Naive thymus-derived CD4-positive, alpha-beta T cell (primary cell): ENCODE measurements at regions of chr3 and their contacts with region 1.

Region 1: DNA sequence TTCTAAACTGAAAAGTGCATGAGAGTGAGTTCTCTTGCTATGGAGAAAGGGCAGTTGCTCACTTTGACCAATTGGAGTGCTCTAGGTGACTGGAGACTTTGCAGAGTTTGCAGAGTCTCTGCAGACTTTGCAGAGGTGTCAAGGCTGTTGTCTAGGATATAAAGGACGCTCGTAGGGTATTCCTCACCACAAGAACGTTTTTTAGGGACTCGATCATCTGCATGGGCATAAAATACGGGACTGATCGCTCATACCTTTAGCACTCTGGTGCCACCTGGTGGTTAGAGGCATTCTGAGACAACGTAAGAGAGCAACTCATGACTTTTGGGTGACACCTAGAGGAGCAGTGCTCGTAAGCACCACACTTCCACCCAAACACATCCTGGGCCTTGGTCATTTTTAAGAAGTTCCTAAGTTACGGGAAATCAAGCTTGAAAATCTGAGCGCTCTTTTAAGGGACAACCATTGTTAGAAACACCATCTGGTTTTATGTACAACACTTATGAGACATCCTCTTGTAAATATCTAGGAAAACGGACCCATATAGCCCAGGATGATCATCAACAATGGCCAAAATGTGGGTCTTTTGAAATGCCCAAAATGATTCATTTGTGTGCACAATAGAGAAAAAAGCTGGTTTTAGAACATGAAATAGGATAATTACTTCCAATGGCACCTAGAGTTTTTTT is 51.6 kb upstream of the XCR1 start:
- DNase-seq: peak; percentile 66 to 89 (median 85)
- ATAC-seq: peak; percentile 100
- H3K4me3 ChIP-seq: no peak overlapping the region
- H3K4me3 Mint-ChIP-seq: peak overlapping the region in 5 of 10 donors; percentile 10 to 63 (median 32)
- H3K27ac ChIP-seq: no peak overlapping the region
- H3K27ac Mint-ChIP-seq: peak overlapping the region in 2 of 9 donors; percentile 3 to 33
- H3K4me1 ChIP-seq: peaks cover 0 to 6% of the 10 kb centered on the region in 2 donors
- H3K4me1 Mint-ChIP-seq: peaks cover 0 to 44% (median 5%) of the 10 kb centered on the region in 7 donors
- H3K27me3 ChIP-seq: no peaks in the 10 kb centered on the region
- H3K27me3 Mint-ChIP-seq: peaks cover 0 to 34% (median 0%) of the 10 kb centered on the region in 5 donors

Region 2: DNA sequence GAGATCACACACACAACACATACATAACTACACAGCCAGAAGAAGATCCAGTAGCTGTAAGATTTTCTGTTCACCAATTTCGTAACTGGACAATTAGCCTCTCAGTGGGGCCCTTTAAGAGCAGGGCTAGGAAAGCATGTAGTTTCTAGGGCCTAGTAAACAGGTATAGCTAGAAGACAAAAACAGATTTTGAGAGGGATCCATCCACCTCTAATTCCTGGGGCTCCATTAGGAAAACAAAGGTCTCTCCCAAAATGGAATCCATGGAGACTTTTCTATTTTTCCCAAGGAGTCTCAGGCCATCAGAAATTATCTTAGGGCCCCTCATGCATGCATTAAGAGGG is 1306.8 kb before region 1 on chr3:
- CTCF ChIA-PET with region 1: no interaction called
- POLR2A ChIA-PET with region 1: no interaction called
- intact Hi-C with region 1: no loop called
- DNase-seq: no peak
- ATAC-seq: no peak
- H3K4me3 ChIP-seq: no peak overlapping the region
- H3K4me3 Mint-ChIP-seq: no peak overlapping the region
- H3K27ac ChIP-seq: no peak overlapping the region
- H3K27ac Mint-ChIP-seq: no peak overlapping the region
- H3K4me1 ChIP-seq: no peaks in the 10 kb centered on the region
- H3K4me1 Mint-ChIP-seq: peaks cover 0 to 3% (median 0%) of the 10 kb centered on the region in 7 donors
- H3K27me3 ChIP-seq: no peaks in the 10 kb centered on the region
- H3K27me3 Mint-ChIP-seq: peaks cover 0 to 3% (median 2%) of the 10 kb centered on the region in 5 donors

Region 3: GRCh38 chr3:45593708-45594609 is 484.9 kb before region 1 on chr3:
- CTCF ChIA-PET with region 1: no interaction called
- POLR2A ChIA-PET with region 1: no interaction called
- intact Hi-C with region 1: loop called in 1 of 2 experiments (anchors 10 kb)
- DNase-seq: peak; percentile 46 to 83 (median 70)
- ATAC-seq: peak; percentile 83
- H3K4me3 ChIP-seq: peak overlapping the region; percentile 71
- H3K4me3 Mint-ChIP-seq: peak overlapping the region; percentile 84 to 99 (median 90)
- H3K27ac ChIP-seq: peak overlapping the region; percentile 72
- H3K27ac Mint-ChIP-seq: peak overlapping the region; percentile 85 to 96 (median 91)
- H3K4me1 ChIP-seq: peaks cover 44 to 58% of the 10 kb centered on the region in 2 donors
- H3K4me1 Mint-ChIP-seq: peaks cover 48 to 61% (median 55%) of the 10 kb centered on the region in 7 donors
- H3K27me3 ChIP-seq: no peaks in the 10 kb centered on the region
- H3K27me3 Mint-ChIP-seq: peaks cover 0 to 3% (median 0%) of the 10 kb centered on the region in 5 donors

Region 4: DNA sequence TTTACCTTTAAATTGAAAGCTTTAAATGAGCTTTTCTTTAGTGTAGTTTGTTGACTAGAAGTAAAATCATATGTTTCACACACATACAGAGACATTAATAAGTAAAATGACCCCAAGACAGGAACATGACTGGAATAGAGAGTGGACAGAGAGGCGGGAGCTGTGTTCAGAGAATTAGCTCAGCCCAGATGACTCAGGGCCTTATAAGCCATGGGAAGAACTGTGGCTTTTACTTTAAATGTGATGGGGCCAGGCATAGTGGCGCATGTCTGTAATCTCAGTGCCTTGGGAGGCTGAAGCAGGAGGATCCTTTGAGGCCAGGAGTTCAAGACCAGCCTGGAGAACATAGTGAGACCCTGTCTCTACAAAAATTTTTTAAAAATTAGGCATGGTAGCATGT is 362.9 kb before region 1 on chr3:
- CTCF ChIA-PET with region 1: no interaction called
- POLR2A ChIA-PET with region 1: no interaction called
- intact Hi-C with region 1: no loop called
- DNase-seq: no peak
- ATAC-seq: no peak
- H3K4me3 ChIP-seq: no peak overlapping the region
- H3K4me3 Mint-ChIP-seq: no peak overlapping the region
- H3K27ac ChIP-seq: no peak overlapping the region
- H3K27ac Mint-ChIP-seq: peak overlapping the region in 3 of 9 donors; percentile 31 to 66 (median 62)
- H3K4me1 ChIP-seq: no peaks in the 10 kb centered on the region
- H3K4me1 Mint-ChIP-seq: peaks cover 10 to 32% (median 21%) of the 10 kb centered on the region in 7 donors
- H3K27me3 ChIP-seq: no peaks in the 10 kb centered on the region
- H3K27me3 Mint-ChIP-seq: no peaks in the 10 kb centered on the region

Region 5: GRCh38 chr3:45760878-45761711 is 317.8 kb before region 1 on chr3:
- CTCF ChIA-PET with region 1: interaction called, 9 read pairs
- POLR2A ChIA-PET with region 1: no interaction called
- intact Hi-C with region 1: loop called (anchors 1 kb)
- DNase-seq: peak in 7 of 9 donors; percentile 10 to 46 (median 33)
- ATAC-seq: peak; percentile 71
- H3K4me3 ChIP-seq: no peak overlapping the region
- H3K4me3 Mint-ChIP-seq: peak overlapping the region in 1 of 10 donors; percentile 16
- H3K27ac ChIP-seq: no peak overlapping the region
- H3K27ac Mint-ChIP-seq: no peak overlapping the region
- H3K4me1 ChIP-seq: no peaks in the 10 kb centered on the region
- H3K4me1 Mint-ChIP-seq: peaks cover 0 to 6% (median 3%) of the 10 kb centered on the region in 7 donors
- H3K27me3 ChIP-seq: no peaks in the 10 kb centered on the region
- H3K27me3 Mint-ChIP-seq: peaks cover 0 to 10% (median 3%) of the 10 kb centered on the region in 5 donors

Region 6: DNA sequence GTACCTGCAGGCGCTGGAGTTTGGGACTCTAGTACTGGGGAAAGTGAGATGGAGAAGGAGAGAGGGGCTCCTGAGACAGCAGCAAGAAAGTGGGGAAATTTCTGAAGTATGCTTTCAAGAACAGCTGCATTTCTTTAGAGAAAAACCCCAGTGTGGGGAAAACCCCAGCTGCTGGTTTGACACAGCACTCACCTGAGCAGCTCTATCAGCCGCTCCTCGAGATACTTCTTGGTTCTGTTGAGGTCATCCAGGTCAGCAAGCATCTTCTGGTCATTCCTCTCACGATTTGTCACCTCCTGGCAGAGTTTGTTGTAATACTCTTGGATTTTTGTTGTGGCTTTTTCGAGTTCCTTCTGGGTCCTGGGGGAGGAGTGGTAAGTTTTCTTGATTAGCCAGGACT is 116.8 kb before region 1 on chr3:
- CTCF ChIA-PET with region 1: interaction called, 48 read pairs
- POLR2A ChIA-PET with region 1: no interaction called
- intact Hi-C with region 1: no loop called
- DNase-seq: no peak
- ATAC-seq: no peak
- H3K4me3 ChIP-seq: no peak overlapping the region
- H3K4me3 Mint-ChIP-seq: peak overlapping the region in 1 of 10 donors; percentile 31
- H3K27ac ChIP-seq: no peak overlapping the region
- H3K27ac Mint-ChIP-seq: peak overlapping the region in 1 of 9 donors; percentile 64
- H3K4me1 ChIP-seq: peaks cover 9 to 82% of the 10 kb centered on the region in 2 donors
- H3K4me1 Mint-ChIP-seq: peaks cover 6 to 75% (median 18%) of the 10 kb centered on the region in 7 donors
- H3K27me3 ChIP-seq: no peaks in the 10 kb centered on the region
- H3K27me3 Mint-ChIP-seq: no peaks in the 10 kb centered on the region

Region 7: GRCh38 chr3:46006238-46007032 is 72.4 kb before region 1 on chr3:
- CTCF ChIA-PET with region 1: interaction called, 4 read pairs
- POLR2A ChIA-PET with region 1: no interaction called
- intact Hi-C with region 1: loop called in 1 of 2 experiments (anchors 2 kb)
- DNase-seq: no peak
- ATAC-seq: no peak
- H3K4me3 ChIP-seq: no peak overlapping the region
- H3K4me3 Mint-ChIP-seq: no peak overlapping the region
- H3K27ac ChIP-seq: no peak overlapping the region
- H3K27ac Mint-ChIP-seq: no peak overlapping the region
- H3K4me1 ChIP-seq: no peaks in the 10 kb centered on the region
- H3K4me1 Mint-ChIP-seq: peaks cover 0 to 8% (median 0%) of the 10 kb centered on the region in 7 donors
- H3K27me3 ChIP-seq: no peaks in the 10 kb centered on the region
- H3K27me3 Mint-ChIP-seq: peaks cover 0 to 8% (median 0%) of the 10 kb centered on the region in 5 donors

Region 8: DNA sequence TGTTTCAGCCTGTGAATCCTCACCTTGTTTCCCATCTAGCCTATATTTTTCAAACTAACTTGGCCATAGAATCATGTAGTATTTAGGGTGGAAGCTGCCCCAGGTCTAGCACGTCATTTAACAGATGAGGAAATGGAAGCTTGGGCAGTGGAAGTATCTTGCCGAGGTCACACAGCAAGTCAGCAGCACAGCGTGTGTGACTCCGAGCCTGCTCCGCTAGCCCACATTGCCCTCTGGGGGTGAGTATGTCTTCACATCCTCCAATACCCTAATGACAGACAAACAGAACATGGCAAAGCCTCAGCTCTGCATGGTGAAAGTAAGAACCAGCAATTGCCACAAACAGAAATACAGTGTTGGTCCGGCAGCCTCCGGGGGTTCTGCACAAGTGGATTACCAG is 289.7 kb after region 1 on chr3:
- CTCF ChIA-PET with region 1: interaction called, 26 read pairs
- POLR2A ChIA-PET with region 1: no interaction called
- intact Hi-C with region 1: loop called in 1 of 2 experiments (anchors 2 kb)
- DNase-seq: peak in 4 of 9 donors; percentile 14 to 37 (median 20)
- ATAC-seq: peak; percentile 90
- H3K4me3 ChIP-seq: no peak overlapping the region
- H3K4me3 Mint-ChIP-seq: peak overlapping the region in 4 of 10 donors; percentile 3 to 26 (median 21)
- H3K27ac ChIP-seq: no peak overlapping the region
- H3K27ac Mint-ChIP-seq: peak overlapping the region in 3 of 9 donors; percentile 24 to 65 (median 57)
- H3K4me1 ChIP-seq: peaks cover 8 to 55% of the 10 kb centered on the region in 2 donors
- H3K4me1 Mint-ChIP-seq: peaks cover 6 to 63% (median 20%) of the 10 kb centered on the region in 7 donors
- H3K27me3 ChIP-seq: no peaks in the 10 kb centered on the region
- H3K27me3 Mint-ChIP-seq: peaks cover 0 to 39% (median 0%) of the 10 kb centered on the region in 5 donors

Region 9: DNA sequence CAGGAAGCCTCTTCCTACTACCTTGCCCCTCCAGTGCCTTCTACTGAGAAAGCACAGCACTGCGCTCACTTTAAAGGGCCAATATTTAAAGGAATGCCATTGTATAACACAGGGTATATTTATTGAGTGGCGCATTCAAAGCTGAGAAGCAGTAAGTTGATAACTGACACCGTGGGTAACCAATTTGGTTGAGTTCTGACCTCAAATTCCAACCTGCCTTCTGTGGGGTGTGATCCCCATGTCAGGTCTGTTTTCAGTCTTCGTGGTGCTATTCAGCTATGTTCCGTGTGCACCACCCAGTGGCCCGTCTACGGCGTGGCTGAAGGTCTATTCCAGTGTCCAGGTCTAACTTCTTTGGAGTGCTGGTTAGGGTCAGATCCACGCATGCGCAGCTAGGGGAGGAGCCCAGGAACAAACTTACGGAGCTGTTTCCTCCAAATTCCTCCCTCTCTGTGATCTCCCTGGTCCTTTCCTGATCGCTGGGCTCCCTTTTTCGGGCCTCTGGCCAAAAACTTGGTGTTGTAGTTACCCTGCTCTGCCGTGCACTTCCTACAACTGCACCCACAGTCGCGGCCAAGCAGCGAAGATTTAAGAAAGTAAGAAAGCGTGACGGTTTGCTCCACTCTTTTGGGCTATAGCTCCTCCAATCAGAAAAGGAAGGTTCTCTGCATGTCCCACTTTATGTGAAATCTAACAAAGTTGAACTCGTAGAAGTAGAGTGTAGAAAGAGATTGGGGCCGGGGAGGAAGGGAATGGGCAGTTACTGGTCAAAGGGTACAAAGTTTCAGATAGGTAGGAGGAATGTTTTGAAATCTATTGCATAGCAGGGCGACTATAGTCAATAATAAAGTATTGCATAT is 479.6 kb after region 1 on chr3:
- CTCF ChIA-PET with region 1: no interaction called
- POLR2A ChIA-PET with region 1: no interaction called
- intact Hi-C with region 1: loop called in 1 of 2 experiments (anchors 5 kb)
- DNase-seq: peak; percentile 58 to 77 (median 70)
- ATAC-seq: peak; percentile 99
- H3K4me3 ChIP-seq: peak overlapping the region; percentile 37
- H3K4me3 Mint-ChIP-seq: peak overlapping the region; percentile 79 to 89 (median 80)
- H3K27ac ChIP-seq: peak overlapping the region; percentile 11
- H3K27ac Mint-ChIP-seq: peak overlapping the region; percentile 19 to 93 (median 51)
- H3K4me1 ChIP-seq: peaks cover 5 to 12% of the 10 kb centered on the region in 2 donors
- H3K4me1 Mint-ChIP-seq: peaks cover 9 to 20% (median 17%) of the 10 kb centered on the region in 7 donors
- H3K27me3 ChIP-seq: no peaks in the 10 kb centered on the region
- H3K27me3 Mint-ChIP-seq: peaks cover 0 to 72% (median 0%) of the 10 kb centered on the region in 5 donors